Activated CD4-positive, alpha-beta T cell treated with anti-CD3 and anti-CD28 coated beads for 36 hours (primary cell): ENCODE measurements at regions of chr14 and their contacts with region 1.

Region 1: GRCh38 chr14:31449971-31450610 is 7.2 kb downstream of the DTD2 start:
- DNase-seq: no peak
- ATAC-seq: no peak
- H3K4me3 Mint-ChIP-seq: no peak overlapping the region
- H3K27ac Mint-ChIP-seq: no peak overlapping the region
- H3K4me1 Mint-ChIP-seq: peaks cover 5% of the 10 kb centered on the region
- H3K27me3 Mint-ChIP-seq: no peaks in the 10 kb centered on the region

Region 2: DNA sequence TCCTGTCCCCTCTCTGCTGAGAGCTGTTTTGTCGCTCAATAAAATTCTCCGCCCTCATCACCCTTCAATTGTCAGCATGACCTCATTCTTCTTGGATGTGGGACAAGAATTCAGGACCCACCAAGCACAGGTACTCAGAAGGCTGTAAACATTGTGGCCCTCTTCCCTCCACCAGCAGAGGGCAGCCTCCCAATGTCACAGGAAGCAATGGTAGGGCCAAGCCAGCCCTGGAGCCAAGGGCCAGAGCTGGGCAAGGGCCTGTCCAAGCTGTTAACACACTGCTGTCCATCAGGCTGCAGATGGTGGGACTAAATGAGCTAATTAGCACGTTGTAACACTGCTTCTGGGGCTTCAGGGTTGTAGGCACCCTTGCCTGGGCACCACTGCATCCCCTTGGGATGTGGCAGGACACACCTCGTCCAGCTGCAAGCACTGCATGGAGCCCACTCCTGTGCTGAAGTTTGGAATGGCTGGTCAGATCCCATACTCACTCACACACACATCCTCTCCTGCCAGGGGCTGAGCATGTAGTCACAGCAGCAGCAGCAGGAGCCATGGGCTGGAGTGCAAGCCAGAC is 179.8 kb before region 1 on chr14:
- CTCF ChIA-PET with region 1: interaction called, 3 read pairs
- POLR2A ChIA-PET with region 1: no interaction called
- intact Hi-C with region 1: loop called in 1 of 2 experiments (anchors 5 kb)
- DNase-seq: peak; percentile 58
- ATAC-seq: no peak
- H3K4me3 Mint-ChIP-seq: no peak overlapping the region
- H3K27ac Mint-ChIP-seq: no peak overlapping the region
- H3K4me1 Mint-ChIP-seq: peaks cover 10% of the 10 kb centered on the region
- H3K27me3 Mint-ChIP-seq: no peaks in the 10 kb centered on the region

Region 3: GRCh38 chr14:31377433-31377832 is 72.7 kb before region 1 on chr14:
- CTCF ChIA-PET with region 1: no interaction called
- POLR2A ChIA-PET with region 1: no interaction called
- intact Hi-C with region 1: loop called in 1 of 2 experiments (anchors 5 kb)
- DNase-seq: no peak
- ATAC-seq: no peak
- H3K4me3 Mint-ChIP-seq: no peak overlapping the region
- H3K27ac Mint-ChIP-seq: no peak overlapping the region
- H3K4me1 Mint-ChIP-seq: peaks cover 6% of the 10 kb centered on the region
- H3K27me3 Mint-ChIP-seq: no peaks in the 10 kb centered on the region

Region 4: GRCh38 chr14:31435276-31435675 is 14.8 kb before region 1 on chr14:
- CTCF ChIA-PET with region 1: interaction called, 11 read pairs
- POLR2A ChIA-PET with region 1: interaction called, 5 read pairs
- intact Hi-C with region 1: no loop called
- DNase-seq: no peak
- ATAC-seq: no peak
- H3K4me3 Mint-ChIP-seq: no peak overlapping the region
- H3K27ac Mint-ChIP-seq: no peak overlapping the region
- H3K4me1 Mint-ChIP-seq: peaks cover 4% of the 10 kb centered on the region
- H3K27me3 Mint-ChIP-seq: no peaks in the 10 kb centered on the region

Region 5: DNA sequence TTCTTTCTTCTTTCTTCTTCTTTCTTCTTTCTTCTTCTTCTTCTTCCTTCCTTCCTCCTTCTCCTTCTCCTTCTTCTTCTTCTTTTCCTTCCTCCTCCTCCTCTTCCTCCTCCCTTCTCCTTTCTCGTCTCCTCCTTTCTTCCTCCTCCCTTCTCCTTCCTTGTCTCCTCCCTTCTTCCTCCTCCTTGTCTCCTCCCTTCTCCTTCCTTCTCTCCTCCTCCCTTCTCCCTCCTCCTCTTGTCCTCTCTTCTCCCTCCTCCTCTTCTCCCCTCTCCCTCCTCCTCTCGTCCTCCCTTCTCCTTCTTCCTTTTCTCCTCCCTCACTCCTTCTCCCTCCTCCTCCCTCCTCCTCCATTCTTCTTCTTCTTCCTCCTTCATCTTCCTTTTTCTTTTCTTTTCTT is 155.6 kb after region 1 on chr14:
- CTCF ChIA-PET with region 1: no interaction called
- POLR2A ChIA-PET with region 1: no interaction called
- intact Hi-C with region 1: no loop called
- DNase-seq: no peak
- ATAC-seq: no peak
- H3K4me3 Mint-ChIP-seq: no peak overlapping the region
- H3K27ac Mint-ChIP-seq: no peak overlapping the region
- H3K4me1 Mint-ChIP-seq: no peaks in the 10 kb centered on the region
- H3K27me3 Mint-ChIP-seq: no peaks in the 10 kb centered on the region

Region 6: GRCh38 chr14:32426586-32427388 is 976.7 kb after region 1 on chr14:
- CTCF ChIA-PET with region 1: no interaction called
- POLR2A ChIA-PET with region 1: no interaction called
- intact Hi-C with region 1: no loop called
- DNase-seq: no peak
- ATAC-seq: no peak
- H3K4me3 Mint-ChIP-seq: no peak overlapping the region
- H3K27ac Mint-ChIP-seq: no peak overlapping the region
- H3K4me1 Mint-ChIP-seq: no peaks in the 10 kb centered on the region
- H3K27me3 Mint-ChIP-seq: peaks cover 2% of the 10 kb centered on the region